Heart left ventricle (tissue), 16 donors: ENCODE measurements at regions of chr9 and their contacts with region 1.

Region 1: GRCh38 chr9:105244003-105244733 is at the start of gene SLC44A1:
- DNase-seq: peak; percentile 97 to 99 (median 99)
- ATAC-seq: peak; percentile 96 to 99 (median 98)
- H3K4me3 ChIP-seq: peak within 1 kb of the TSS; percentile 70 to 90 (median 82)
- H3K27ac ChIP-seq: peak within 1 kb of the TSS; percentile 73 to 89 (median 82)
- H3K4me1 ChIP-seq: peaks cover 0 to 50% (median 29%) of the 10 kb centered on the region in 12 donors
- H3K27me3 ChIP-seq: no peaks in the 10 kb centered on the region
- CTCF ChIP-seq: peak in 5 of 12 donors; percentile 10 to 33 (median 16)
- POLR2A ChIP-seq: peak in 1 of 2 donors; percentile 90
- total RNA-seq, gene SLC44A1: 14.6 to 29.4 (median 21.3) TPM

Region 2: DNA sequence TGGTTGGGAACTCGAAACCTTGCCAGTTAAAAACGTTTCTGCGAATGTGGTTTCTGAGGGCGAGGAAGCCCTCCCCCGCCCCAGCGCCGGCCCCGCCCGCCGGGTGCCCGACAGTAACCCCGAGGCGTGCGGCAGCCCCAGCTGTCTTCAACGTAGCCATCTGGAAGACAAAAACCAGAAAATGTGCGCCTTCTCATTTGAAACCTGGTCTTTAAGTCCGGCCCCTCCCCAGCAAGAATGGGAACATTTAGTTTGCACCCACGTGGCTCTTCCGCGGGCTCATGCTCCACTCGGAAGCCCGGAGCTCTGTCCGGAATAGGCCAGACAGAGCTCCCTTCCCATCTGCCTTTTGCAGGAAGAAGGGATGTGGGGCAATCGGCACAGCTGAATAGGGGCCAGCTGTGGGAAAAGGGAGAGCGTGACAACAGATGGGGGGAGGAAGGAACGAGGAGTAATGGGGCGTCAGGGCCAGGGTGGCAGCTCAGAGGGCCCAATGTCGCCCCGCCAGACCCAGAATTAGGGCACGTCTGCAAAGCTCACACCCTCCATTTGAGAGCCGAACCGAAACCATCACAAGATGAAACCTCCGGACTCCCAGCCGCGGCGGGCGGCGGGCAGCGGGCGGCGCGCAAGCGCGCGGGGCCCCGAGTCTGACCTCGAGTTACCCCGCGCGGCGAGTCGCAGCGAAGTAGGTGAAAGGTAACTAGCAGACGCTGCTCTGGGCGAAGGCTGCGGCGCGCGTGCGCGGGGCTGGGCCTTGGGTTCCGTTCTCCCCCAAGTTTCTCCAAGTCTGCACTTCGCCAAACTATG is 252.8 kb before region 1 on chr9:
- intact Hi-C with region 1: loop called in 1 of 10 experiments (anchors 10 kb)
- DNase-seq: peak; percentile 88 to 96 (median 95)
- ATAC-seq: peak; percentile 75 to 91 (median 86)
- H3K4me3 ChIP-seq: peak overlapping the region; percentile 33 to 86 (median 68)
- H3K27ac ChIP-seq: peak overlapping the region; percentile 88 to 97 (median 95)
- H3K4me1 ChIP-seq: peaks cover 3 to 51% (median 36%) of the 10 kb centered on the region in 12 donors
- H3K27me3 ChIP-seq: no peaks in the 10 kb centered on the region
- CTCF ChIP-seq: no peak
- POLR2A ChIP-seq: peak in 1 of 2 donors; percentile 62

Region 3: GRCh38 chr9:105259731-105260612 is 15.8 kb after region 1 on chr9:
- intact Hi-C with region 1: no loop called
- DNase-seq: no peak
- ATAC-seq: peak; percentile 29 to 58 (median 41)
- H3K4me3 ChIP-seq: no peak overlapping the region
- H3K27ac ChIP-seq: peak overlapping the region in 5 of 12 donors; percentile 3 to 38 (median 6)
- H3K4me1 ChIP-seq: peaks cover 0 to 40% (median 26%) of the 10 kb centered on the region in 12 donors
- H3K27me3 ChIP-seq: no peaks in the 10 kb centered on the region
- CTCF ChIP-seq: no peak
- POLR2A ChIP-seq: no peak

Region 4: DNA sequence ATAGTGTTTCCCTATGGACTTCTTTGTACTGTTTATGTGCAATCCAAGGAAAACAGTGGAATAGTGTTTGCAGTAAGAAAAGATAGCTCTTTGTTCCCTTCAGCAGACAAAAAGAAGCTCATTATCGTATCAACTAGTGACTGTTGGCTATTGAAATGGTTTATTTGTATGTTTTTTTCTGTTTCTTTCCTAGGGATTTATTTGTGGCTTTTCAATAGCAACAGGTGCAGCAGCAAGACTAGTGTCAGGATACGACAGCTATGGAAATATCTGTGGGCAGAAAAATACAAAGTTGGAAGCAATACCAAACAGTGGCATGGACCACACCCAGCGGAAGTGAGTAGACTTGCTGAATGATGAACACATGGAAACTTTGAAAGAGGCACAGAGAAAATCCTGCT is 65.4 kb after region 1 on chr9:
- intact Hi-C with region 1: loop called in 1 of 10 experiments (anchors 10 kb)
- DNase-seq: no peak
- ATAC-seq: no peak
- H3K4me3 ChIP-seq: no peak overlapping the region
- H3K27ac ChIP-seq: no peak overlapping the region
- H3K4me1 ChIP-seq: peaks cover 0 to 21% (median 0%) of the 10 kb centered on the region in 12 donors
- H3K27me3 ChIP-seq: no peaks in the 10 kb centered on the region
- CTCF ChIP-seq: no peak
- POLR2A ChIP-seq: no peak

Region 5: DNA sequence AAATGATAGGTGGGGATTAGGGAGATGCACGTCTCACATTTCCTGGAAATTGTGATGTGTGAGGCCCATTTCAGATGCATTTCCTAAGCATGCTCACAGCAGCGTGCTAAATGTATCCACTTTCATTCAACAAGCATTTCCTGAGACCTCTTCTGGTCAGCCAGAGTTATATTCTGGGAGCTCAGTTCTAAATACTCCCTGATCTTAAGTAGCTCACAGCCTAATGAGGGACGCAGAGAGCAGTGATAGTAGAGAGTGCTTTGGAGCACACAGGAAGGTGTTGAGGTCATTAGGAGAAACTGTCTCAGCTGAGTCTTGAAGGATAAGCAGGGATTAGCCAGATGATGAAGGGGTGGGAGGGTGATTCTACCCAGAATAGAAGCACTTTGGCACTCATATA is 157.5 kb after region 1 on chr9:
- intact Hi-C with region 1: loop called in 1 of 10 experiments (anchors 5 kb)
- DNase-seq: no peak
- ATAC-seq: peak in 2 of 4 donors; percentile 24 to 52
- H3K4me3 ChIP-seq: no peak overlapping the region
- H3K27ac ChIP-seq: no peak overlapping the region
- H3K4me1 ChIP-seq: peaks cover 0 to 6% (median 0%) of the 10 kb centered on the region in 12 donors
- H3K27me3 ChIP-seq: no peaks in the 10 kb centered on the region
- CTCF ChIP-seq: peak in 4 of 12 donors; percentile 6 to 20 (median 12)
- POLR2A ChIP-seq: no peak